Activated naive CD4-positive, alpha-beta T cell treated with anti-CD3 and anti-CD28 coated beads for 36 hours (primary cell): ENCODE measurements at regions of chr20 and their contacts with region 1.

Region 1: DNA sequence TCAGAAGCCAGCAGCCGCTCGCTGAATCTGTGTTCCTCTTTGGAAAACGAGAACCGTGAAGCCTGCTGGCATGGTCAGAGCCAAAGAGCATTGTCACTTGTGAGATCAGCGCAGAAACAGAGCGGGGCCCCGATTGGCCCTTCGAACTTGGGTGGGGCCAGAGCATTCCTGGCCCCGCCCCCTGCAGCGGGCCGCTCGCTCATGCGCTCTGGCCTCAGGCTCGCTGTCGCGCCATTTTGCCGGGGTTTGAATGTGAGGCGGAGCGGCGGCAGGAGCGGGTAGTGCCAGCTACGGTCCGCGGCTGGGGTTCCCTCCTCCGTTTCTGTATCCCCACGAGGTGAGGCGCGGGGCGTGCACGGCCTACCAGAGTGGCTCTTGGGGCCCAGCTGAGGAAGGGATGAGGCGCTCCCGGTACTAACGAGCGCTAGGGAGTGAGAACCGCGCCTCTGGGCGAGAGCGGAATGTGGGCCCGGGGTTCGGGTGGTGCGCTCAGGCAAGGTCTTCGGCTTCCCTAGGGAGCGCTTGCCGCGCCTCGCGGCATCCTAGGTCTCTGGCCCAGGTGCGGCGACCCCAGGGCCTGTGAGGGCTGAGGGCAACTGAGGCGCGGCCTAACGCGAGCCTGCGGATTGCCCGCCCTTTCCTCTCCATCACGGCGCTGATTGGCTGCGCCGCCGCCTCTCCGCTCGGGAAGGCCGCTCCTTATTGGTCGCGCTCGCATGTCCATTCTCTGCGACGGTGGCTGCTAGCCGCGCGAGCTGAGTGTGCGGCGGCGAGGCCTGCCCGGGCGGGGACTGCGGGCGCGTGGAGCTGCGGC is at the start of gene CSE1L:
- DNase-seq: peak; percentile 96
- H3K4me3 Mint-ChIP-seq: peak within 1 kb of the TSS; percentile 98
- H3K27ac Mint-ChIP-seq: peak within 1 kb of the TSS; percentile 99
- H3K4me1 Mint-ChIP-seq: peaks cover 38% of the 10 kb centered on the region
- H3K27me3 Mint-ChIP-seq: no peaks in the 10 kb centered on the region
- total RNA-seq, gene CSE1L: 86.1 to 88.9 TPM

Region 2: GRCh38 chr20:49166534-49167449 is 120.5 kb after region 1 on chr20:
- CTCF ChIA-PET with region 1: no interaction called
- intact Hi-C with region 1: loop called (anchors 1 kb)
- DNase-seq: no peak
- H3K4me3 Mint-ChIP-seq: peak overlapping the region; percentile 48
- H3K27ac Mint-ChIP-seq: peak overlapping the region; percentile 84
- H3K4me1 Mint-ChIP-seq: peaks cover 71% of the 10 kb centered on the region
- H3K27me3 Mint-ChIP-seq: no peaks in the 10 kb centered on the region